ENCODE measurements at regions of chr6 and their contacts with region 1.

Region 1: DNA sequence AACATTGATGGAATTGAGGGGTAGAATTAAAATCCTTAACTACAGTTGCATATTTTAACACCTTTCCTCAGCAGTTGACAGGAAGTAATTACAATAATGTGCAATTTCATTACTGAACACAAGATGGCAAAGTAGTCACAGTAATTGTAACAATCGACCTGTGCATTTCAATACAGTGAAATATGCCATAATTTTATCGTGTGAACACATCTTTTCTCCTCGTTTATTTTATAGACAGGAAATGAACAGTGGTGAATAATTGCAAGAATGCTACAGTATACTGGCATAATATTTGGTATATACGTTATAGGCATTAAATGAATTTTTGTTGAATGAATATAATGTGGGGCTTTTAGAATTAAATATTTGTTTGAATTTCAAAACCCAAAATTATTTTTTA is 25.0 kb downstream of the CYB5R4 start:
- DNase-seq: peak; percentile 38 to 75 (median 50)
- ATAC-seq: peak; percentile 90
- H3K4me3 ChIP-seq: no peak overlapping the region
- H3K27ac ChIP-seq: no peak overlapping the region
- H3K4me1 ChIP-seq: no peaks in the 10 kb centered on the region
- H3K27me3 ChIP-seq: no peaks in the 10 kb centered on the region
- CTCF ChIP-seq: peak; percentile 60 to 91 (median 62); a peak in 5 of 6 replicates
- EP300 ChIP-seq: peak; percentile 14; the same call in 1 of the 2 replicates
- POLR2A ChIP-seq: no peak
- RAD21 ChIP-seq: peak; percentile 99 to 100

Region 2: DNA sequence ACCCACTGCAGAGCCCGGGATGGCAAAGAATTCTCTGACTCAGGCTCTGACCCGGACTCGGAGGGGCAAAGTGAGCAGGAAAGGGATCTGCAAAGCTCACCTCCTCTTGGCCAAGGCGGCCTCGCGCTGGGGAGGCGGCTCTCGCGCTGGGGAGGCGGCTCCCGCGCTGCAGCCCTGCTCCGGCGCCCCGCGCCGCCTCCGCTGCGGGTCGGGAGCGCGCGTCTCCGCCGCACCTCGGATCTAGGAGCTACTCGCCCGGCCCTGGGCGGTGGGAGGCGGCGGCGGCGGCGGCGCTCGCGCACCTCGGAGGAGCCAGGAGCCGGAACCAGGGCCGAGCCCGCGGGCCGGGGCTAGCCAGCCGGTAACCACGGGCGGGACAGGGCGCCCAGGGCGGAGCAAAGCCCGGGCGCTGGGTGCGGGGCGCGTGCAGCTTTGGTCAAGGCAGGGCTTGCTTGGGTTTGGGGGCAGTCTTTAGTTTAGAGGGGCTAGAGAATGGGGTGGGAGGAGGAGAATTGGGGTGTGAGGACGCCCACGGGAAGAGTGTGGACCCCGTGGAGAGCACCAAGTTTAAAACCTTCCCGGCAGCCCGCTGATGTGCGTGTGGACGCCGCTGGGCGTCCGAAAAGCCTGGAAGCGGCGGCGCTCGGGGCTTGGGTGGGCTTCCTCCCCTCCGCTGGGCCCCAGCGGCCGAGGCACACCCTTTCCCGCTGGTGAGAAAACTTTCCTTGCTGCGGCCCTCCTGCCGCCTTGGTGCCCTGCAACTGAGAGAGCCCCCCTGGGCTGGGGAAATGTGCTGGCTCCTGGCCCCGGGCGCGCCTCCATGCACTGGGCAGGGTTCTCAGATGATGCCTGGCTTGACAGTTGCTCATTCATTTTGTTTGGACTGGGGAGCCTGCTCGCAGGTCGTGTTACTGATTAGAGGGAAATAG is 149.3 kb after region 1 on chr6 and contains the start of gene MRAP2:
- CTCF ChIA-PET with region 1: no interaction called
- POLR2A ChIA-PET with region 1: interaction called, 3 read pairs
- in situ Hi-C with region 1: no loop called
- intact Hi-C with region 1: loop called (anchors 5 kb)
- DNase-seq: peak; percentile 68 to 73 (median 72)
- ATAC-seq: peak; percentile 95
- H3K4me3 ChIP-seq: peak within 1 kb of the TSS; percentile 93
- H3K27ac ChIP-seq: peak within 1 kb of the TSS; percentile 68
- H3K4me1 ChIP-seq: peaks cover 15% of the 10 kb centered on the region in 2 experiments
- H3K27me3 ChIP-seq: no peaks in the 10 kb centered on the region
- CTCF ChIP-seq: no peak
- EP300 ChIP-seq: no peak
- POLR2A ChIP-seq: no peak
- RAD21 ChIP-seq: peak in 1 of 2 experiments; percentile 11; a peak in 2 of 4 replicates
- polyA plus RNA-seq, gene MRAP2: 5.9 to 6.8 TPM

Region 3: DNA sequence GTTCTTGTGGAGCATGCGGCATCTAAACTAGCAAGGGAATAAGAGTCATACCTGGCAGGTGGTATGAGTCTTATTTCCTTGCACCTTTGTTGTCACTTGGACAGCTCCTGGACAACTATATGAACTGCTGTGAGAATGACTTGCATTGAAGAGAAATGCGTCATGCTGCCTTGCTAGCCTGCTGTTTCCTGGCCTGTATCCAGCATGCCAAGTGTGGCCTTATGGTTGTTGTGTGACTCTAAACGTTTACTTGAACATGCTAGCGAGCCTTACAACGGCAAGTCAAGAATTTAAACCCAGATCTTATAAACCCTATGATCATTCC is 252.5 kb after region 1 on chr6:
- CTCF ChIA-PET with region 1: no interaction called
- POLR2A ChIA-PET with region 1: no interaction called
- in situ Hi-C with region 1: no loop called
- intact Hi-C with region 1: no loop called
- DNase-seq: peak; percentile 54 to 90 (median 66)
- ATAC-seq: peak; percentile 96
- H3K4me3 ChIP-seq: no peak overlapping the region
- H3K27ac ChIP-seq: peak overlapping the region; percentile 80
- H3K4me1 ChIP-seq: peaks cover 0 to 14% of the 10 kb centered on the region in 2 experiments; a peak in 3 of 5 replicates
- H3K27me3 ChIP-seq: no peaks in the 10 kb centered on the region
- CTCF ChIP-seq: no peak
- EP300 ChIP-seq: no peak; the same call in 1 of the 2 replicates
- POLR2A ChIP-seq: no peak
- RAD21 ChIP-seq: peak in 1 of 2 experiments; percentile 17; a peak in 1 of 4 replicates

Region 4: DNA sequence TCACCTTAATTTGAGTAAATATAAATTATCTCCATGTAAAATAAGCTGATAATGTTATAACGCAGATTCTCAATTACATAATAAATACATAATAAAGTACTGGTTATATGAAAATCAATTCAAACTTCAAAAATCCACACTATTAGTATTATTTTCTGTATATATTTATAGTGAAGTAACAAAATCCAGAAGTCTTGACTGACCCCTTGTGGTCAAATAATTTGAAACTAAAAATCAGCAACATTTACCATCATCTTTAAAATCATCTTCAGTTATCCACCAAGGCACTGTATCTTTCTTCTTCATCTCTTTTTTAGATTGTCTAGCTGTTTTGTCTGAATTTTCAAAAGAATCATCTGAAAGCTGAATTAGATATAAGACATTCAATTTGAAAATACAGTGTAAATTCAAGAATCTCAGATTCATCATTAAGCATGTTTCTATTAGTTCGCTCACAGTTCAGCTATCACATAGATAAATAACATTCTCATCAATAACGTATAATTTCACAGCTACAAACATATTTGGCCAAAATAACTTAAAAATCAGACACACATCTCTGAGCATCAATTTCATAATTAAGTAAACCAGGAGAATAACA is 336.4 kb after region 1 on chr6:
- CTCF ChIA-PET with region 1: interaction called, 45 read pairs
- POLR2A ChIA-PET with region 1: no interaction called
- in situ Hi-C with region 1: no loop called
- intact Hi-C with region 1: loop called (anchors 1 kb)
- DNase-seq: peak in 3 of 4 experiments; percentile 11 to 58 (median 16)
- ATAC-seq: 0 out of 3 replicates have a peak, but pooled peaks have one; percentile 49
- H3K4me3 ChIP-seq: no peak overlapping the region
- H3K27ac ChIP-seq: no peak overlapping the region
- H3K4me1 ChIP-seq: peaks cover 0 to under 1% of the 10 kb centered on the region in 2 experiments; a peak in 2 of 5 replicates
- H3K27me3 ChIP-seq: no peaks in the 10 kb centered on the region
- CTCF ChIP-seq: peak in 2 of 3 experiments; percentile 43 to 65; a peak in 4 of 6 replicates
- EP300 ChIP-seq: no peak
- POLR2A ChIP-seq: no peak
- RAD21 ChIP-seq: peak; percentile 81 to 84

Region 5: GRCh38 chr6:84411060-84411629 is 526.6 kb after region 1 on chr6:
- CTCF ChIA-PET with region 1: no interaction called
- POLR2A ChIA-PET with region 1: no interaction called
- in situ Hi-C with region 1: no loop called
- intact Hi-C with region 1: loop called (anchors 10 kb)
- DNase-seq: no peak
- ATAC-seq: no peak
- H3K4me3 ChIP-seq: no peak overlapping the region
- H3K27ac ChIP-seq: no peak overlapping the region
- H3K4me1 ChIP-seq: no peaks in the 10 kb centered on the region
- H3K27me3 ChIP-seq: 0 out of 5 replicates have a peak, but pooled peaks cover 0 to 3% of the 10 kb centered on the region in 2 experiments
- CTCF ChIP-seq: no peak
- EP300 ChIP-seq: no peak
- POLR2A ChIP-seq: no peak
- RAD21 ChIP-seq: no peak

Region 6: DNA sequence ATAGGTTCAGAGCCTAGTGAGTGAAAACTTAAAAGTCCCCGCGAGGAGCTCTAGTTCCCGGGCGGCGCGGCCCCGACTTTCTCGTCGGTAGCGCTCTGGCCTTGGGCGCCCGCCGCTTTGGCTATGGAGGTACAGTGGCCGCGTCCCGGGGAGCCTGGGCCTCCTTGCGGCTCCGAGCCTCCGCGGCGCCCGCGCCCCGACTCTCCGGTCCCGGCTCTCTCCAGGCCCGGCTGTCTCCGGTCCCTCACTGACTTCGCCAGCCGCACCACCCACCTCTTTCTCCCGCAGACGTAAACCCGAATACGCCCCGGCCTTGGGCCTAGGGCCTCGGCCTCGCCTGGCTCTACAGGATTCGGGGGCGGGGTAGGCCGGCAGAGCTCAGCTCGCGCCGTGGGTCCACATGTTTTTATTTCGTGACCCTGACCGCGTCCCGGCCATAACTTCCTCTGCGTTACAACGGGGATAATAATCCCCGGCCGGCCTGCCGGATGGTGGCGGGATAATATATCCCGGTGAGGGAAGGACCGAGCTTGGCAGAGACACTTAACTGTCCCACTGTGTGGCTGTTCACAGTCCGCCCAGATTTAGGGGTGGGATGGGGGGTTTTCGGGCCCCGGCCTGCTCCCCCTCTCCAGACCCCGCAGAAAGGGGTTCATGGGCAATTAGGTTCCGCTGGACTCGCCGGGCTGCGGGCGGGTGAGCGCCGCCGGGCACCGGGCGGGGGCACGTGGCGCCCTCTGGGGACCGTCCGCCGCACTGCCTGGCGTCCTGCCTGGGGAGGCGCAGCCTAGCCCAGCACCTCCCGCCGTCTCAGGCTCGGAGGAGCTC is 889.8 kb after region 1 on chr6:
- CTCF ChIA-PET with region 1: no interaction called
- POLR2A ChIA-PET with region 1: no interaction called
- in situ Hi-C with region 1: loop called (anchors 25 kb)
- intact Hi-C with region 1: no loop called
- DNase-seq: peak; percentile 46 to 60 (median 52)
- ATAC-seq: peak; percentile 92
- H3K4me3 ChIP-seq: peak overlapping the region; percentile 37
- H3K27ac ChIP-seq: peak overlapping the region; percentile 37; the same call in 1 of the 3 replicates
- H3K4me1 ChIP-seq: peaks cover 2 to 22% of the 10 kb centered on the region in 2 experiments; a peak in 2 of 5 replicates
- H3K27me3 ChIP-seq: peaks cover 0 to 1% of the 10 kb centered on the region in 2 experiments; a peak in 2 of 5 replicates
- CTCF ChIP-seq: peak; percentile 48 to 68 (median 54); a peak in 5 of 6 replicates
- EP300 ChIP-seq: no peak
- POLR2A ChIP-seq: 0 out of 2 replicates have a peak, but pooled peaks have one; percentile 1
- RAD21 ChIP-seq: peak; percentile 20 to 49; a peak in 3 of 4 replicates

Measured in K562 (cell line).